Sciatic nerve (tissue), 2 donors: ENCODE measurements at regions of chr9 and their contacts with region 1.

Region 1: DNA sequence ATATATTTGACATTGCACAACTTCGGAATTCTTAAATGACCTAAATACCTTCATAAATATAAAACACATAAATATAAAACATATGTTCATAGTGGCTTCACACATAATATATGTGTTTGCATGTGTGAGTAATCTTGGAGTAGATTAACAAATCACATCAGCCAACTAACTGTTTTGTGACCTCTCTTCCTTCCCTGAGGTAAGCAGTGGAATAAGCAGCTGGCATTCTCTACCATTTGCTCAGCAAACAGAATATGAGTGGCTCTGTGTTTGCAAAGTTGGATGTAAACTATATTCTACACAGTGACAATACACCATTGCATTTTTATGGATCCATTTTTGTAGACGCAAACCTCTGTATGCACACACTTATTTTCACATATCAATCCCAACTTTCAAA is 189.9 kb downstream of the ACER2 start:
- DNase-seq: no peak
- ATAC-seq: no peak

Region 2: DNA sequence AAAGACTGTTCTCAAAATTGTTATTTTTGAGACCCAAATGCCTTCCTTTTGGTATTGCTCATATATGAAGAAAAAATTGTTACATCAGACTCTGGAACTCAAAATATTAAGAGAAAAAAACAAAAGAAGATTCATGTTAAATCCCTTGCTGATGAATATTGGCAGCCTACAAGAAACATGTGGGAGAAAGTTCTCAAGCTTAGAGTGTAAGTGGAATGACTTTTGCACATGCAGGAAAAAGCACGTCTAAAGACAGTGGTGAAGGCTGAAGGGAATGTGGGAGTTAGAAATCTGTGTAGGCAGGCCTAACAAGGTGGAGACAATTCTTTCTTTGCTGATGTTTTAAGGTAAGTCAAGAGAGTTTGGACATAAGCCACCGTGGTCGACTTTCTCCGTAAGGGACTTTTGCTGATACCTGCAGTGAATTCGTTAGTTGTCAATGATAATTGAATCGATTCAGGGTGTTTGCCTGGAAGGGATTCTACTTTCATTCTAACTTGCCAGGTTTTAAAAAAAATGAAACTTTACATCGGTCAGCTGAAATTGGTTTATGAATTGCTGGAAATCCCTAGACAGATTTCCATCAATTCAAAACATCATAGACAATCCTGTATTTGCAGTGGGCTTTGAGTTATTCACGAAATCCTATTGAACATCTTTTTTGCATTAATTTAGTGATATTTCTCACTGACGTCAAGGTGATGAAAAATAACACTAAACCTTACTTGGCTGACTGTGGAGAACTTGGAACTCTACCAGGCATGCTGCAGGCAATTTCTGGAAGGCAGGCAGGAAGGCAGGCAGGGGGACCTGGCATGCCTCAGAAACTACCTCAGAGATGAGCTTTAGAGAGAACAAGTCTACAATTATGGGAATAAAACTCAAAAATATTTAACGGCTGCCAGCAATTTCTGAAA is 1483.9 kb before region 1 on chr9:
- intact Hi-C with region 1: loop called (anchors 5 kb)
- DNase-seq: no peak
- ATAC-seq: peak; percentile 70

Region 3: DNA sequence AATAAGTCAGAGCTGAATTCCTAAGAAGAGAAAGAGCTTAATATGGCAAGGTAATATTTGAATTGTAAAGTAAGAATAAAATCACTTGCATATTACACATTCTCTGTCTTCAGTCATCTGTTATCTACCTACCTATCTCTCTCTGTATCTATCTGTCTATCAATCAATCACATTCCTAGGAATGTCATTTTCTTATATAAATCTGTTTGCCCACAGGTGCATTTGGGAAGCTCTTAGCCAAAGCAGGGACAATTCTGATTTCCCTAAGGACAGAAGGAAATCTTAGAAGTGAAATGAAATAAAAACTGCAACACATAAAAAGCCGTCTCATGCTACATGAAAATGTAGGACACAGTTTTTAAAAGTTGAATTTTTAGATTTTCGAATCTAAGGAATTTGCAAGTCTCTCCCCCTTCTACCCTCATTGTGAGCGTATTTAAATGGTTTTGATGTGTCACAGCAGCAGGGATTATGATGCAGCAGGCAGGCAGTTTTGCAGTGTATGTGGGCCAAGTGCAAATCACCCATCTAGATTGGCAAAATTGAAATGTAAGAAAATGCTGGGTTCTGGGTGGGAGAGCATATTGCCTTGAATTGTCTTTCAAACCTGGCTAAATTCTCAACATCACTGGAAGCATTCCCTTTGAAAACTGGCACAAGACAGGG is 34.2 kb before region 1 on chr9:
- intact Hi-C with region 1: loop called (anchors 1 kb)
- DNase-seq: no peak
- ATAC-seq: no peak

Region 4: GRCh38 chr9:19769208-19769607 is 170.5 kb after region 1 on chr9:
- intact Hi-C with region 1: no loop called
- DNase-seq: no peak
- ATAC-seq: no peak

Region 5: GRCh38 chr9:20962536-20963225 is 1364.0 kb after region 1 on chr9:
- intact Hi-C with region 1: no loop called
- DNase-seq: no peak
- ATAC-seq: no peak